Dendritic cell treated with granulocyte-macrophage colony-stimulating factor and Interleukin-4, amounts not matched to agents 40 ng/mL and 50 ng/mL, for 4 days (primary cell): ENCODE measurements at regions of chr1 and their contacts with region 1.

Region 1: GRCh38 chr1:55021965-55022546 is 17.3 kb upstream of the PCSK9 start:
- H3K4me3 Mint-ChIP-seq: no peak overlapping the region
- H3K27ac Mint-ChIP-seq: peak overlapping the region; percentile 30
- H3K4me1 Mint-ChIP-seq: peaks cover 31% of the 10 kb centered on the region
- H3K27me3 Mint-ChIP-seq: peaks cover 2% of the 10 kb centered on the region

Region 2: GRCh38 chr1:54950369-54951163 is 71.5 kb before region 1 on chr1:
- intact Hi-C with region 1: loop called (anchors 1 kb)
- H3K4me3 Mint-ChIP-seq: no peak overlapping the region
- H3K27ac Mint-ChIP-seq: no peak overlapping the region
- H3K4me1 Mint-ChIP-seq: peaks cover 58% of the 10 kb centered on the region
- H3K27me3 Mint-ChIP-seq: peaks cover 3% of the 10 kb centered on the region

Region 3: GRCh38 chr1:54982739-54983138 is 39.3 kb before region 1 on chr1:
- intact Hi-C with region 1: no loop called
- H3K4me3 Mint-ChIP-seq: no peak overlapping the region
- H3K27ac Mint-ChIP-seq: no peak overlapping the region
- H3K4me1 Mint-ChIP-seq: no peaks in the 10 kb centered on the region
- H3K27me3 Mint-ChIP-seq: peaks cover 56% of the 10 kb centered on the region